ENCODE measurements at regions of chr2 and their contacts with region 1.

Region 1: GRCh38 chr2:76599732-76600368 is 889.1 kb upstream of the GCFC2 start:
- DNase-seq: no peak
- H3K4me3 Mint-ChIP-seq: no peak overlapping the region
- H3K27ac Mint-ChIP-seq: no peak overlapping the region
- H3K4me1 Mint-ChIP-seq: no peaks in the 10 kb centered on the region
- H3K27me3 Mint-ChIP-seq: no peaks in the 10 kb centered on the region

Region 2: DNA sequence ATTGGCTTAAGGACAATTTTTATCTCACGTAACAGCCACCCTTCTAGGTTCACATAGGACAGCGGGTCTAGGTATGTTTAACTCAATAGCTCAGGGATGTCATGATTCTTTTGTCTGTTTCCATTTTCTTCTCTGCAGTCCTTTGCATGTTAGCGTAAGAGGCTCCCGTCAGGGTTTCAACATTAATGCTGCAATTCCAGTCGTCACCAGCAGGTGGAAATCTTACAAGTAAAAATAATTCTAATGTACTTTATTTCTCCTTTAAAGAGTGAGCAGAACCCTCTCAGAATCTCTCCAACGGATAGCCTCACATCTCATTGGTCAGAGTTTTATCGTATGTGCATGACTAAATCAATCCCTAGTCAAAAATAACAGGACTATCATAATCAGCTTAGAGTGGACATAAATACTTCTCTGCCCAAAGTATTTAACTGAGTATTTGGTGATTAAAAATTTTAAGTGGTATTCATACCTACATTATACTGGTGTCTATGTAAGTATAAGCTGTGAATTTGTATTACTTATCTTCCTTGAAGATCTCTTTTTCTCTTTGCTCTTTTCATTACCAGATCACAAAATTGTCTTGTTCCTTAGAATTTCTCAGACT is 401.9 kb before region 1 on chr2:
- CTCF ChIA-PET with region 1: interaction called, 4 read pairs
- POLR2A ChIA-PET with region 1: no interaction called
- intact Hi-C with region 1: loop called (anchors 5 kb)
- DNase-seq: peak; percentile 32
- H3K4me3 Mint-ChIP-seq: no peak overlapping the region
- H3K27ac Mint-ChIP-seq: no peak overlapping the region
- H3K4me1 Mint-ChIP-seq: no peaks in the 10 kb centered on the region
- H3K27me3 Mint-ChIP-seq: no peaks in the 10 kb centered on the region

Region 3: DNA sequence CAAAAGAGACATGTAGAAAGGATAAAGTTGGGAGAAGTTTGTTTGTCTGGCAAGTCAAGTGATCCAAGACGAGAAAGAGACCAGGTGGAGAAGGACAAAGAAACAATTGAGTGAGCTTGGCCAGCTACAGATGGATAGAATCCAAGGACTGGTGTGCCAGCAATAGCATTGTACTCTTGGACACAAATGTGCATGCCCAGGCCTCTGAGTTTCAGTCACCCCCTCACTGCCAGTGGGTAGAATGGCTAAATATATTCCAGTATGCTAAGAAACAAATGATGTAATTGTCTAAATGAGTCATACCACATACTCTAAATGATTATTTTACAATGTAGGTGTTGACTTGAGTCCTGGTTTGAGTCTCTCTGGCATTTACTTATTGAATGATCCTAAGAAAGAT is 41.1 kb after region 1 on chr2:
- CTCF ChIA-PET with region 1: no interaction called
- POLR2A ChIA-PET with region 1: no interaction called
- intact Hi-C with region 1: no loop called
- DNase-seq: no peak
- H3K4me3 Mint-ChIP-seq: no peak overlapping the region
- H3K27ac Mint-ChIP-seq: no peak overlapping the region
- H3K4me1 Mint-ChIP-seq: no peaks in the 10 kb centered on the region
- H3K27me3 Mint-ChIP-seq: no peaks in the 10 kb centered on the region

Measured in activated CD4-positive, alpha-beta memory T cell treated with anti-CD3 and anti-CD28 coated beads for 36 hours (primary cell).